Activated CD8-positive, alpha-beta T cell treated with anti-CD3 and anti-CD28 coated beads for 36 hours (primary cell): ENCODE measurements at regions of chr5 and their contacts with region 1.

Region 1: GRCh38 chr5:35852084-35852734 is 4.5 kb upstream of the IL7R start:
- DNase-seq: peak; percentile 82
- ATAC-seq: peak; percentile 47
- H3K4me3 Mint-ChIP-seq: peak overlapping the region; percentile 95
- H3K27ac Mint-ChIP-seq: peak overlapping the region; percentile 99
- H3K4me1 Mint-ChIP-seq: peaks cover 75% of the 10 kb centered on the region
- H3K27me3 Mint-ChIP-seq: no peaks in the 10 kb centered on the region
- CTCF ChIP-seq: no peak

Region 2: GRCh38 chr5:35470866-35471265 is 381.3 kb before region 1 on chr5:
- CTCF ChIA-PET with region 1: no interaction called
- POLR2A ChIA-PET with region 1: no interaction called
- intact Hi-C with region 1: no loop called
- DNase-seq: no peak
- ATAC-seq: no peak
- H3K4me3 Mint-ChIP-seq: no peak overlapping the region
- H3K27ac Mint-ChIP-seq: no peak overlapping the region
- H3K4me1 Mint-ChIP-seq: no peaks in the 10 kb centered on the region
- H3K27me3 Mint-ChIP-seq: peaks cover 2% of the 10 kb centered on the region
- CTCF ChIP-seq: no peak

Region 3: GRCh38 chr5:35672995-35673394 is 179.2 kb before region 1 on chr5:
- CTCF ChIA-PET with region 1: interaction called, 3 read pairs
- POLR2A ChIA-PET with region 1: interaction called, 4 read pairs
- intact Hi-C with region 1: loop called (anchors 5 kb)
- DNase-seq: peak; percentile 71
- ATAC-seq: peak; percentile 90
- H3K4me3 Mint-ChIP-seq: no peak overlapping the region
- H3K27ac Mint-ChIP-seq: peak overlapping the region; percentile 84
- H3K4me1 Mint-ChIP-seq: peaks cover 59% of the 10 kb centered on the region
- H3K27me3 Mint-ChIP-seq: no peaks in the 10 kb centered on the region
- CTCF ChIP-seq: no peak

Region 4: GRCh38 chr5:35752012-35752411 is 100.2 kb before region 1 on chr5:
- CTCF ChIA-PET with region 1: no interaction called
- POLR2A ChIA-PET with region 1: no interaction called
- intact Hi-C with region 1: no loop called
- DNase-seq: no peak
- ATAC-seq: no peak
- H3K4me3 Mint-ChIP-seq: no peak overlapping the region
- H3K27ac Mint-ChIP-seq: no peak overlapping the region
- H3K4me1 Mint-ChIP-seq: peaks cover 13% of the 10 kb centered on the region
- H3K27me3 Mint-ChIP-seq: no peaks in the 10 kb centered on the region
- CTCF ChIP-seq: no peak

Region 5: GRCh38 chr5:35794684-35795375 is 57.4 kb before region 1 on chr5:
- CTCF ChIA-PET with region 1: interaction called, 9 read pairs
- POLR2A ChIA-PET with region 1: interaction called, 253 read pairs
- intact Hi-C with region 1: no loop called
- DNase-seq: no peak
- ATAC-seq: peak; percentile 19
- H3K4me3 Mint-ChIP-seq: no peak overlapping the region
- H3K27ac Mint-ChIP-seq: peak overlapping the region; percentile 99
- H3K4me1 Mint-ChIP-seq: peaks cover 81% of the 10 kb centered on the region
- H3K27me3 Mint-ChIP-seq: no peaks in the 10 kb centered on the region
- CTCF ChIP-seq: no peak

Region 6: DNA sequence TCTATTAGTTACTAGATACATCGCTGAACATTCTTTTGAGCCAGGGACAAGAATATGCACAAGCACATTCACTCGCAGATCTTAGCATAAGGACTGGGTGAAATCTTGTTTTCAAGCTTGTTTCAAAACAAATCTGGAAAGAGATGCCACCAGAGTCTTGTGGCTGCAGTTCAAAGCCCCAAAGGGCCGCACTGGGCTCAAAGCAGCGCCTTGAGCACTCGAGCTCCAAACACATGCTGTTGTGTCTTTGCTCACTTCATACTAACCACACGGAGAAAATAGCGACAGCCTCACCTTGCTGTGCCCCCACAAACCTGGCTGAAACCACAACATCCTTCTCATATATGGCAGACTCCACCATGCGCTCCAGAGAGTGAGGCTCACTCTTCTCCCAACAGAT is 29.7 kb before region 1 on chr5:
- CTCF ChIA-PET with region 1: interaction called, 7 read pairs
- POLR2A ChIA-PET with region 1: interaction called, 241 read pairs
- intact Hi-C with region 1: loop called (anchors 5 kb)
- DNase-seq: peak; percentile 82
- ATAC-seq: peak; percentile 28
- H3K4me3 Mint-ChIP-seq: peak overlapping the region; percentile 55
- H3K27ac Mint-ChIP-seq: peak overlapping the region; percentile 92
- H3K4me1 Mint-ChIP-seq: peaks cover 87% of the 10 kb centered on the region
- H3K27me3 Mint-ChIP-seq: no peaks in the 10 kb centered on the region
- CTCF ChIP-seq: no peak

Region 7: DNA sequence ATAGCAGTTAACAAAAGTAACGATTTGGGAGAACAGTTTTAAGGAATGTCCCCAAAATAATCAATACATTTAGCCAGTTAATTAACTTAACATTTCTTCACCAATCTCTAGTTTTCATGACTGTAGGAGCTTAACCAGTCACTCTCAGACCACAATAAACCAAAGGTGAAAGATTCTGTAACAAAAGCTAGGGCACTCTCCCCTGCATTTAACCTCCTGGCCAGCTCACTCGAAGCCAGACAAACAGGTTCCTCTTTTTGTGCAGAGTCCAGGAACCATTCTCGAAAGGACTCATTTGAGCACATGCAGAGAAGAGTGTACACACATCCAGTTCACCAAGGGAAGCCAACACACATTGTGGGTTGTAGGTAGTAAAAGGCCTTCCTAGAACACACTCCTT is 10.9 kb after region 1 on chr5:
- CTCF ChIA-PET with region 1: interaction called, 8 read pairs
- POLR2A ChIA-PET with region 1: interaction called, 42 read pairs
- intact Hi-C with region 1: no loop called
- DNase-seq: peak; percentile 45
- ATAC-seq: peak; percentile 52
- H3K4me3 Mint-ChIP-seq: peak overlapping the region; percentile 95
- H3K27ac Mint-ChIP-seq: peak overlapping the region; percentile 97
- H3K4me1 Mint-ChIP-seq: peaks cover 80% of the 10 kb centered on the region
- H3K27me3 Mint-ChIP-seq: no peaks in the 10 kb centered on the region
- CTCF ChIP-seq: no peak

Region 8: DNA sequence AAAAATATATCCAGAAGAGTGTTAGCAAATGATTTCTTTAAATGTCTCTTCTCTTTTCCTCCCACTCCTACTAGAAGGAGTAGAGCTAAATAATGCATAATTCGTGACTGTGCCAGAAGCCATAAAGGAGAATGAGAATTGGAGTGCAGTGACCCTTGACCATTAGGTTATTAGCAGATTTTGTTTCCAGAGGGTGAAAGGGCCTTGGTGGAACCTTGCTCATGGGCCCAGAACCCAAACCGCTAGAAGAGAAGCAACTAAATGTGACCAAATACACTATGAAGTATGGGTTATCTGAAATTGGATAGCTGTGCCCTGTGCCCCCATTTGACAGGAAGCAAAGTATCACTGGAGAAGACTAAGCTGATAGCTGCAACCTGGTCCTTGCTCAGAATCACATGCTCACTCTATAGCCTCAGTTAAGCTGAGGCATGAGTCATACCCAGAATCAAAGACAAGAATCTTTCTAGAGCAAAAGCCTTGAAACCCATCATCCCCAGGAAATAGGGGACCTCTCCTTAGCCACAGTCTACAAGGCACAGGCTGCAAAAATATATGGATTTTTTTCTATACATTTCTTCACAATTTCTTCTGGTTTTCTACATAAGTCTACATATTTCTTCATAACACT is 50.0 kb after region 1 on chr5:
- CTCF ChIA-PET with region 1: interaction called, 16 read pairs
- POLR2A ChIA-PET with region 1: interaction called, 147 read pairs
- intact Hi-C with region 1: loop called (anchors 2 kb)
- DNase-seq: peak; percentile 51
- ATAC-seq: peak; percentile 61
- H3K4me3 Mint-ChIP-seq: no peak overlapping the region
- H3K27ac Mint-ChIP-seq: peak overlapping the region; percentile 60
- H3K4me1 Mint-ChIP-seq: peaks cover 86% of the 10 kb centered on the region
- H3K27me3 Mint-ChIP-seq: no peaks in the 10 kb centered on the region
- CTCF ChIP-seq: no peak